Colonic mucosa (tissue), 4 donors: ENCODE measurements at regions of chr2 and their contacts with region 1.

Region 1: DNA sequence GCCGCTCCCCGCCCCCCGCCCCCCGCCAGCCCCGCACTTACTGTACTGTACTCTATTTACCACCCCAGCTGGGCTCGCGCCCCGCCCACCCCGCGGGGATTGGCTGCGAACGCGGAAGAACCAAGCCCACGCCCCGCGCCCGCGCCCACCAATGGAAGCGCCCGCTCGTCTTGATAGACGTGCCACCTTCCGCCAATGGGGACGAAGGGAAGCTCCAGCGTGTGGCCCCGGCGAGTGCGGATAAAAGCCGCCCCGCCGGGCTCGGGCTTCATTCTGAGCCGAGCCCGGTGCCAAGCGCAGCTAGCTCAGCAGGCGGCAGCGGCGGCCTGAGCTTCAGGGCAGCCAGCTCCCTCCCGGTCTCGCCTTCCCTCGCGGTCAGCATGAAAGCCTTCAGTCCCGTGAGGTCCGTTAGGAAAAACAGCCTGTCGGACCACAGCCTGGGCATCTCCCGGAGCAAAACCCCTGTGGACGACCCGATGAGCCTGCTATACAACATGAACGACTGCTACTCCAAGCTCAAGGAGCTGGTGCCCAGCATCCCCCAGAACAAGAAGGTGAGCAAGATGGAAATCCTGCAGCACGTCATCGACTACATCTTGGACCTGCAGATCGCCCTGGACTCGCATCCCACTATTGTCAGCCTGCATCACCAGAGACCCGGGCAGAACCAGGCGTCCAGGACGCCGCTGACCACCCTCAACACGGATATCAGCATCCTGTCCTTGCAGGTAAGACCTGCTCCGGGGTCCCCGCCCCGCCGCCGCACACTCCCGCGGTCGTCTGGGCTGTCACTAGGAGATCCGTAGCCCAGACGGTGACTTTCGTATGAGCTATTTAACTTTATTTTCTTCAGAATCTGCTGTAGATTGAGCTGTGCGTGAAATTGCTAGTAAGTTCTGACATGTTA is at the start of gene ID2:
- DNase-seq: peak; percentile 100
- H3K4me3 ChIP-seq: peak within 1 kb of the TSS; percentile 81
- H3K27ac ChIP-seq: peak within 1 kb of the TSS; percentile 98
- H3K4me1 ChIP-seq: no peaks in the 10 kb centered on the region
- H3K27me3 ChIP-seq: no peaks in the 10 kb centered on the region
- CTCF ChIP-seq: no peak
- total RNA-seq, gene ID2: 100.0 to 108 TPM

Region 2: GRCh38 chr2:7209757-7210555 is 1472.1 kb before region 1 on chr2:
- intact Hi-C with region 1: loop called (anchors 5 kb)
- DNase-seq: no peak
- H3K4me3 ChIP-seq: no peak overlapping the region
- H3K27ac ChIP-seq: no peak overlapping the region
- H3K4me1 ChIP-seq: no peaks in the 10 kb centered on the region
- H3K27me3 ChIP-seq: no peaks in the 10 kb centered on the region
- CTCF ChIP-seq: no peak

Region 3: DNA sequence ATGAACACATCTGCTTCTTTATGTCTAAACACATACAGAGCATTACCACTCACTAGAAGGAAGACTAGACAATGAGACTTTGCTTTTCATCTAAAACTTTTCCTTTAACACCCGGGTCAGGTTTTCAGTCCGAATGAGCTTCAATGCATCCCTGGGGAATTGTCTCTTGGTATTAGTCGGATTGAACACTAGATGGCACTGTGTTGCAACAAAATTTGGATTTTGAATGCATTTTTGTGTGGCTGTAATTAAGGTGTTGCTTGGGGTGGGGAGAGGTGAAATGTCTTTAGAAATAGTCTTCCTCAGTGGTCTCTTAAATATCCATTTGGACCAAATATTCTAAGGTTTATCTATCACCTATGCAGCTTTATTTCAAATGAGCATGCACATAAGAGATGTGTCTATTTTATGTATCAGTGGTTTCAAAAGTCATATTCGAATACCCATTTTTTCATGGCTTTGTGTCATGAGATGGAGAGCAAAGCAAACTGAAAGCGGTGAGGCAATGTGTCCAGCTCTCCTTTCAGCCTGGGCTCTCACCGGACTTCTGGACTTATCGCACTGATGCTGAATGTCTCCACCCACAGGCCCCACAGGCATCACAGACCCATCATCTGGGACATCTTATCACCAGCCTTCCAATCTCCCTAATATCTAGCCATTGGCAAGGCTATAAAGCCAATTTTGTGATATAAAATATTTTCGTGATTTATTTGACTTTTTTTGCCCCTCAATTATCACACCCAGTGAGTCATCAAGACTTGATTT is 1254.6 kb before region 1 on chr2:
- intact Hi-C with region 1: loop called (anchors 2 kb)
- DNase-seq: no peak
- H3K4me3 ChIP-seq: no peak overlapping the region
- H3K27ac ChIP-seq: no peak overlapping the region
- H3K4me1 ChIP-seq: no peaks in the 10 kb centered on the region
- H3K27me3 ChIP-seq: no peaks in the 10 kb centered on the region
- CTCF ChIP-seq: peak; percentile 75

Region 4: DNA sequence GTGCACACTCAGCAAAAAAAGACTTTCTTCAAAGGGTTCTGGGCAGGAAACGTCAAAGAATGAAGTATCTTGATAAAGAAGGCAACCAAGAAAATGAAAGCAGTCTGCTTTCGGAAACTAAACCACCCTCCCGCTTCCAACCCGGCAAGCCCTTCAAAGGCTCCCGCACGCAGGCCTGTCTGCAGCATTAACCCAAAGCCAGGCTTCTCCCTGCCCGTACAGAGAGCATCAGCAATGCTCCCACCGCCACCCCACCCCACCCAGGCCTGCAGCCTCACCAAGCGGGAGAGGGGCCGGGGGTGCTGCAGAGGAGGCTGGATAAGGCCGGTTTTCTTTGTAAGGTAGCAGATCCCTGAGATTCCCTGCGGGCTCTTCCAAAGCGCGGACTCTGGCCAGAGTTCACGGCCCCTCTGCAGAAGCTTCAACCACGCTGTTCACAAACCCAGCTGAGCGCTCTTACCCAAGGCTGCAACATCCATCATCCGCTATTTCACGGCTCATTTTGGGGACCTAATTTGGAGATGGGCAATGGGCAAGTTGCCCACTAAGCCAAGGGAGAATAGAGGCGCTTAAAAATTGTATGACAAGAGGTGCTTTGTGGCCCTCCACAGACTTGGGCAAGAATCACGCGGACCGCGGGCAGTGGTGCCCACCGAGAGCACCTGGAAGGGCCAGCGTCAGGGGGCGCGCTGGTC is 225.7 kb before region 1 on chr2:
- intact Hi-C with region 1: loop called (anchors 10 kb)
- DNase-seq: no peak
- H3K4me3 ChIP-seq: peak overlapping the region; percentile 18
- H3K27ac ChIP-seq: peak overlapping the region; percentile 78
- H3K4me1 ChIP-seq: peaks cover 5% of the 10 kb centered on the region
- H3K27me3 ChIP-seq: no peaks in the 10 kb centered on the region
- CTCF ChIP-seq: no peak

Region 5: DNA sequence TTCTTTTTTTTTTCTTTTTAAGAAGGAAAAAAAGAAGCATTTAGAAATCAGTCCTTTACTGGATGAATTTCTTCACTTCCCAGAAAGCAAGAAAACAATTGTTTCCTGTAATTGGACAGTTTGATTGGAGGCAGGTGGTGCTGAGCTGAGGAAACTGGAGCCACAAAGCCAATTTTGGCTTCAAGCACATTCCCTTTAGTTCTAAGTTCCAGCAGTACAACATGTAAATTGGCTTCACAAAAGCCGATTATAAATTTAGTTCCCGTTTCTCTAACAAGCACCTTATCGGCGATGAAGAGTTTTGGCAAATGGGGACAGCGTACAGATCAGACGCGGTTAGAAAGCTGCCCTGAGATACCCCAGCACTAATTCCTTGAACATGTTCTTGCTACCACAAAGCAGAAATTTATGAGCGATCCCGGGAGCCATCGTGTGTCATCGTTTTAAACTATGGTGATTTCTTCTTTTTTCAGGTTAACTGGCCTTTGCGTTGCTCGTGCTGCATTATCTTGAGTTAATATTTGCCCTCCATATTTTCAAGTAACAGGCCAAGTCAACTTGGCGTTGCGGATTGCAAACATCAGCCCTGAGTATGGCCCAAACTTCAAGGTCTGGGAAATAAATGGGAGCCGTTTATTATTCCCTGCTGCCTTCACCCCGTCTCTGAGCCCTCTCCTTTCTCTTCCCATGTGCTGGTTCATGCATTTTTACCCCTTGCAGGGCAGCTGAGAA is 190.6 kb before region 1 on chr2:
- intact Hi-C with region 1: loop called (anchors 10 kb)
- DNase-seq: no peak
- H3K4me3 ChIP-seq: no peak overlapping the region
- H3K27ac ChIP-seq: no peak overlapping the region
- H3K4me1 ChIP-seq: peaks cover 11% of the 10 kb centered on the region
- H3K27me3 ChIP-seq: no peaks in the 10 kb centered on the region
- CTCF ChIP-seq: no peak

Region 6: DNA sequence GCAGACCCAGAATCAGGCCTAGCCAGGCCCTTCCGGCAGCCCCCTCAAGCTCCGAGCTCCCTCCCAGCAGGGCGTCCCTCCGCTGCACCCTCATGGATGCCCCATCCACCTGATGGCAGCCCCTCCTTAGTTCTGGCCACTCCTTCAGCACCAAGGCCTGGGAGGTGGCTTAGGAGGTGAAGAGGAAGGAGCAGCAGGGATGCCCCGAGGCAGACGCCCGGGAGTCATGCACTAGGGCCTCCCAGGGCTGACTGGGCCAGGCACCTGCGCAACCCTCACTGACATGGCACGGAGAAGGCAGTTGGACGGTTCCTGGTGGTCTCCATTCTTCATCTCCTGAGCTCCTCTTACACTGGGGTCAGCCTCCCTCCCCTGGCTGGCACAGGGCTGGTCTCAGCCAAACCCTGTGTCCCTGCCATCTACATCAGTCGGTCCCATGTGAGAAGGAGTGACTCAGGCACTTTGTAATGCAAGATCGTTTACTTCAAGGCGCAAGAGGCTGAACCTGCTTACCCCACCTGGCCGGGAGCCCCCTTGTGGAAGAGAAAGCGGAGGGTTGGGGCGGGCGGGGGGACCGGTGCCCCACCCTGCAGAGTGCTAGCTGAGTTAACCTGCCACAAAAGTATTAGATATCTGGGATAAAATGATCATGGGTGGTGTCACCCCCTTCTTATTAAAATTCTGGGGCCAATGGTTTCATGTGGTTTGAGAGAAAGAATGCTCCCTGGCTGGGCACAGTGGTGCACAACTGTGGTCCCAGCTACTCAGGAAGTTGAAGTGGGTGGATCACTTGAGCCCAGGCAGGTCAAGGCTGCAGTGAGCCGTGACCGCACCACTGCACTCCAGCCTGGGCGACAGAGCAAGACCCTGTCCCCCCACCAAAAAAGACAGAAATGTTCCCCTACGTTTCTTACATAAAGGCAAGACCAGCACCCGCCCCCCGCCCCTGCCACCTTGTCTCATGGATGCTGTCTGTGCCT is 53.5 kb before region 1 on chr2:
- intact Hi-C with region 1: loop called (anchors 5 kb)
- DNase-seq: peak; percentile 53
- H3K4me3 ChIP-seq: no peak overlapping the region
- H3K27ac ChIP-seq: peak overlapping the region; percentile 37
- H3K4me1 ChIP-seq: peaks cover 7% of the 10 kb centered on the region
- H3K27me3 ChIP-seq: no peaks in the 10 kb centered on the region
- CTCF ChIP-seq: no peak

Region 7: DNA sequence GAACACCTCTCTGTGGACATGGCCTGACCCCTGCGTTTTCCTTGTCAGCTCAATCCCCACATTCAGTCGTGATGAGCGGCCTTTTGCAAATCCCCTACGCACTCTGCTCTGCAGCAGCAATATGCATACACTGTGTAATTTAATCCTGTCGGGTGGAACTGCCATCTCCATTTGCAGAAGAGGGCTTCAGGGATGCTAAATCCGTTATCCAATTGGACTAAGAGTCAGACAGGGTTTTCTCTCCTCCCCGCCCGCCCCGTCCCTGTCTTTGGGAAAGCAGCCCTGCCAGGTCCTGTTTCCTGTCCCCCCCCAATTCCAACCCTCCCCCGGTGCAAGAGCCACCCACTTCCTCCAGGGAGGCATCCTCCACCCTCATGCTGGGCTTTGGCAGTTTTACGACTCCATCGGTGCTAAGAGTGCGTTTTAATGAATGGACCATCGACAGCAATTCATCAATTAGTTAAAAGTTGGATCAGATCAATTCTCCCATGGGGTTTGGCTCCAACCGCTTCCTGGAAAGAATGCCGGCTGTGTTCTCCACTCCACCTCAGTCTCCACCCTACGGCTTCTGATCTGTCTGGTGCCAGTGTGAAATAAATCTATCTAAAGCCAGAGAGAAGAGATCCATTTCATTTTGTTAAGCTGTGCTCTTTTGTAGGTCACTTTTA is 471.1 kb after region 1 on chr2:
- intact Hi-C with region 1: no loop called
- DNase-seq: no peak
- H3K4me3 ChIP-seq: no peak overlapping the region
- H3K27ac ChIP-seq: no peak overlapping the region
- H3K4me1 ChIP-seq: no peaks in the 10 kb centered on the region
- H3K27me3 ChIP-seq: no peaks in the 10 kb centered on the region
- CTCF ChIP-seq: no peak